Activated CD4-positive, alpha-beta T cell treated with anti-CD3 and anti-CD28 coated beads, Interleukin-2, amount 10 ng/mL, durations not matched to agents 24 days and 14 days (primary cell): ENCODE measurements at regions of chr19 and their contacts with region 1.

Region 1: DNA sequence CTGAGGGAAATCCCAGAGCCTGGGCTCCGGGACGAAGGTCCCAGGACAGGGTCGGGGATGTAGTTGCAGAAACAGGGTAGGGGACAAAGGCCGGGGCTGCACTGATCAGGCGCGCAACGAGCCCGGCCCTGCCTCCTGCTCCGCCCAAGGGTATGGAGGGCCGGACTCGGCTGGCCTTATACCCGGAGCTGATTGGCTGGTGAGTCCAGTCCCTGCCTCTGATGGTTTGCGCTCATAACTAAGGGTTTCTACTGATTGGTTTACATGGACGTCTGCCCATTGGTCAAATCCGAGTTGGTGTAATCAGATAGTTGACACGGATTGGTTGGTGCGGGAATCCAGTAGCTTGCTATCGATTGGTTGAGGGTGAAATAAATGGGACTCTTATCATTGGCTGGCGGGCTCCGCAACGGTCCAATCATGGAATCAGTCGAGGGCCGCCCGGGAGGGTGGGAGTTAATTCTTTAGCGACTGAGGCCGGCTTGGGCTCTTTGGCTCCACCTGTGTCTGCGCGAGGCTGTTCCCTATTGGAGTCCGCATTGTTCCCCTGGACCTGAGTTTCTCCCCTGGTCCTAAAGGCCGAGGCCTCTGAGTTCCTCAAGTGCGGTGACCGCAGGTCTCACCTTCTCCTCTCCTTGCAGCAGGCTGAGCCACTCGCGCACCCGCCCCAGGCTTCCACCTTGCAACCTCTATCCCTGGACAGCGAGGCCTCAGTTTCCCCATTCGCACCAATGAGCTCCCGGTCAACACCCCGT is 570 bp upstream of the MPND start:
- DNase-seq: peak; percentile 98
- H3K4me3 Mint-ChIP-seq: peak overlapping the region; percentile 93
- H3K27ac Mint-ChIP-seq: peak overlapping the region; percentile 95
- H3K4me1 Mint-ChIP-seq: peaks cover 20% of the 10 kb centered on the region
- H3K27me3 Mint-ChIP-seq: no peaks in the 10 kb centered on the region

Region 2: GRCh38 chr19:4097501-4097900 is 245.3 kb before region 1 on chr19:
- intact Hi-C with region 1: no loop called
- DNase-seq: no peak
- H3K4me3 Mint-ChIP-seq: no peak overlapping the region
- H3K27ac Mint-ChIP-seq: no peak overlapping the region
- H3K4me1 Mint-ChIP-seq: peaks cover 3% of the 10 kb centered on the region
- H3K27me3 Mint-ChIP-seq: no peaks in the 10 kb centered on the region

Region 3: GRCh38 chr19:4328243-4328990 is 14.4 kb before region 1 on chr19:
- intact Hi-C with region 1: loop called (anchors 1 kb)
- DNase-seq: peak; percentile 96
- H3K4me3 Mint-ChIP-seq: peak overlapping the region; percentile 90
- H3K27ac Mint-ChIP-seq: peak overlapping the region; percentile 93
- H3K4me1 Mint-ChIP-seq: peaks cover 26% of the 10 kb centered on the region
- H3K27me3 Mint-ChIP-seq: peaks cover 6% of the 10 kb centered on the region

Region 4: DNA sequence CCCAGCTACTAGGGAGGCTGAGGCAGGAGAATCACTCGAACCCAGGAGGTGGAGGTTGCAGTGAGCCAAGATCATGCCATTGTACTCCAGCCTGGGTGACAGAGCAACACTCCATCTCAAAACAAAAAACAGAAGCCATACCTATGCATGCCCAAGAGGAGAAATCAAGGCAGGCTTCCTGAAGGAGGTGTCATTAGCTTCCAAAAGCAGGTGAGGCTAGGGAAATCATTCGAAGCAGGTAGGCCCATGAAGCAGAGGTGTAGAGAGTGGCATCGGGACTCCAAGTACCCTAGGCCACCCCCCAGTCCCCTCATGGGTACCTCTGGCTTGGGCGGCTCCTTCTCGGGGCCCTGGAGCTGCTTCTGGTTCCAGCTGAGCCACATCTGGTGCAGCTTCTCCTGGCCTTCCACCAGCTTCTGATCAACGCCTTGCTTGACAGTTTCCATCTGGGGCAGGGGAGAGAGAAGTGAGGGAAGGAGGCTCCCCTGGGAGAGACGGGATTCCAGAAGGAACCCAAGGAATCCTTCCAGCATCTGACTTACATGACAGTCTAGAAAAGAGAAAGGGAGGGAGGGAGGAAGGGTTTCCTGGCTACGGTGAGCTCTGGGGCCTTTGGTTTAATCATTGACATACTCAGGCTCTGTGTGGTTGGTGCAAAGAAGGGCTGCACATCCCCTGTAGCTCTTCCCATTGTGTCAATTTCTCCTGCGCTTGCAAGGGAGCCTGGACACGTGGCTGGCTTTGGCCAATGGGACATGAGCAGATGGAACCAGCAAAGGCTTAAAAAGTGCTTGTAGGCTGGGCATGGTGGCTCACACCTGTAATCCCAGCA is 501.8 kb after region 1 on chr19:
- intact Hi-C with region 1: no loop called
- DNase-seq: no peak
- H3K4me3 Mint-ChIP-seq: no peak overlapping the region
- H3K27ac Mint-ChIP-seq: no peak overlapping the region
- H3K4me1 Mint-ChIP-seq: peaks cover 8% of the 10 kb centered on the region
- H3K27me3 Mint-ChIP-seq: no peaks in the 10 kb centered on the region